Mammary epithelial cell (primary cell): ENCODE measurements at regions of chr16 and their contacts with region 1.

Region 1: GRCh38 chr16:55577887-55578286 is 11.4 kb downstream of the CAPNS2 start:
- DNase-seq: no peak
- H3K4me3 ChIP-seq: no peak overlapping the region
- H3K27ac ChIP-seq: no peak overlapping the region
- H3K4me1 ChIP-seq: no peaks in the 10 kb centered on the region
- H3K27me3 ChIP-seq: no peaks in the 10 kb centered on the region
- CTCF ChIP-seq: no peak

Region 2: GRCh38 chr16:55480228-55480661 is 97.6 kb before region 1 on chr16:
- CTCF ChIA-PET with region 1: no interaction called
- dilution Hi-C with region 1: no loop called
- in situ Hi-C with region 1: no loop called
- intact Hi-C with region 1: no loop called
- DNase-seq: peak; percentile 59
- H3K4me3 ChIP-seq: peak overlapping the region; percentile 13 to 52 (median 47)
- H3K27ac ChIP-seq: no peak overlapping the region
- H3K4me1 ChIP-seq: peaks cover 24% of the 10 kb centered on the region
- H3K27me3 ChIP-seq: no peaks in the 10 kb centered on the region
- CTCF ChIP-seq: no peak

Region 3: DNA sequence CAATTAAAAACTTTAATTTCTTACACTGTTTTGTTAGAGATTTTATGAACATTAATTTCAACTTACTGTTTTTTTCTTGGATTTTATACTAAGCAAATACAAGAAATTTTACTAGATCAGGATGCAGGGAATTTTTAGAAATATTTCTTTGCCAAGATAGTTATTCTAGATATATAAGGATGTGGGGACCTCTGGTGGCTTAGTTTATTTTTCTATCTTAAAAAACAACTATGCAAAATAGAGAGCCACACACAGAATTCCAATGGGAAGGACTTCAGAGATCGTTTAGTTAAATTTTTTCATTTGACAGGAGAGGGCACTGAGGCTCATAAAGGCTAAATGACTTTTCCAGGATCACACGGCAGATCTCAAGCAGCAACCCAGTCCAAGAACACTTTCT is 34.4 kb before region 1 on chr16:
- CTCF ChIA-PET with region 1: no interaction called
- dilution Hi-C with region 1: no loop called
- in situ Hi-C with region 1: no loop called
- intact Hi-C with region 1: no loop called
- DNase-seq: no peak
- H3K4me3 ChIP-seq: no peak overlapping the region
- H3K27ac ChIP-seq: no peak overlapping the region
- H3K4me1 ChIP-seq: peaks cover 25% of the 10 kb centered on the region
- H3K27me3 ChIP-seq: no peaks in the 10 kb centered on the region
- CTCF ChIP-seq: peak; percentile 11 to 35

Region 4: DNA sequence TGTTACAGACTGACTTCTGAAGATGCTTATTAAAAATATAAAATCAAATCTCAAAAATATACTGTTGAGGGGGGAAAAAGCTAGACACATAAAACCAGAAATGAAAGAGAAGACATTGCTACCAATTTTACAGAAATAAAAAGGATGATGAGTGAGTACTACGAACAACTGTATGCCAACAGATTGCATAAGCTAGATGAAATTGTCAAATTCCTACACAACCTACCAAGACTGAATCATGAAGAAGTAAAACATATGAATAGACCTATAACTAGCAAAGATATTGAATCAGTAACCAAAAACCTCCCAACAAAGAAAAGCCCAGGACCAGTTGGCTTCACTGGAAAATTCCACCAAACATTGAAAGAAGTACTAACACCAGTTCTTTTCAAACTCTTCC is 15.0 kb before region 1 on chr16:
- CTCF ChIA-PET with region 1: interaction called, 10 read pairs
- dilution Hi-C with region 1: no loop called
- in situ Hi-C with region 1: no loop called
- intact Hi-C with region 1: no loop called
- DNase-seq: peak; percentile 32
- H3K4me3 ChIP-seq: no peak overlapping the region
- H3K27ac ChIP-seq: peak overlapping the region; percentile 21
- H3K4me1 ChIP-seq: peaks cover 65% of the 10 kb centered on the region
- H3K27me3 ChIP-seq: no peaks in the 10 kb centered on the region
- CTCF ChIP-seq: no peak